Activated CD8-positive, alpha-beta T cell treated with anti-CD3 and anti-CD28 coated beads for 36 hours (primary cell): ENCODE measurements at regions of chr19 and their contacts with region 1.

Region 1: GRCh38 chr19:10027158-10027693 is 13.9 kb downstream of the RDH8 start:
- DNase-seq: no peak
- ATAC-seq: no peak
- H3K4me3 Mint-ChIP-seq: no peak overlapping the region
- H3K27ac Mint-ChIP-seq: no peak overlapping the region
- H3K4me1 Mint-ChIP-seq: peaks cover 4% of the 10 kb centered on the region
- H3K27me3 Mint-ChIP-seq: peaks cover 11% of the 10 kb centered on the region
- CTCF ChIP-seq: no peak

Region 2: GRCh38 chr19:9923440-9923839 is 103.8 kb before region 1 on chr19:
- CTCF ChIA-PET with region 1: interaction called, 100 read pairs
- POLR2A ChIA-PET with region 1: no interaction called
- intact Hi-C with region 1: no loop called
- DNase-seq: no peak
- ATAC-seq: no peak
- H3K4me3 Mint-ChIP-seq: no peak overlapping the region
- H3K27ac Mint-ChIP-seq: no peak overlapping the region
- H3K4me1 Mint-ChIP-seq: no peaks in the 10 kb centered on the region
- H3K27me3 Mint-ChIP-seq: peaks cover 9% of the 10 kb centered on the region
- CTCF ChIP-seq: peak; percentile 13

Region 3: GRCh38 chr19:9939301-9939913 is 87.8 kb before region 1 on chr19:
- CTCF ChIA-PET with region 1: interaction called, 18 read pairs
- POLR2A ChIA-PET with region 1: no interaction called
- intact Hi-C with region 1: loop called (anchors 2 kb)
- DNase-seq: no peak
- ATAC-seq: no peak
- H3K4me3 Mint-ChIP-seq: no peak overlapping the region
- H3K27ac Mint-ChIP-seq: no peak overlapping the region
- H3K4me1 Mint-ChIP-seq: peaks cover 20% of the 10 kb centered on the region
- H3K27me3 Mint-ChIP-seq: peaks cover 48% of the 10 kb centered on the region
- CTCF ChIP-seq: no peak

Region 4: DNA sequence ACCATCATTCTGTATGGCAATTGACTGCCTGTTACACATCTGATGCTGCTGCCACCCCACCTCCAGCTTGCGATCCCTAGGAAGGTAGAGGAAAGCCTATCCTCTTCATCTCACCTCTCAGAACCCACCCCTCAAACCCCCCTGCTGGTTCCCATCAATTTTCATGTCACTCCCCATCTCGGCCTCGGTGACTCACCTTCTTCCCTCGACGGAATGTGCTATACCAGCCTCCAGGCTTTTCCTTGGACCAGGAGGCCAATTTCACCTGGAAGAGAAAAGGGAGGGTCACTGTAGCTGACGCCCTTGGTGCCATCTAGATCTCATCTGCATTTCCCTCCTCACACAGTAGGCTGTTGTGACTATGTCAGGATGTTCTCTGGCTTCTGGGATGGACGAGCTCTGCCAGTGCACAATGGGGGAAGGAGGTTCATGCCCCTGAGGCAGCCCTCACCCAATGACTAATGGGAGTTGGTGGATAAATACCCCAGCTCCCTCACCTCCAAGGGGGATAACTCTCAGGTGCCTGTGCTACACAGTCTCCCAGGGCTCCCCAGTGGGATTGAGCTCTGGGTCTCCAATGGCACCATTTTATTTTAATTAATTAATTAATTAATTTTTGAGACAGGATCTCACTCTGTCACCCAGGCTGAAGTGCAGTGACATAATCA is 64.5 kb before region 1 on chr19:
- CTCF ChIA-PET with region 1: interaction called, 11 read pairs
- POLR2A ChIA-PET with region 1: no interaction called
- intact Hi-C with region 1: no loop called
- DNase-seq: no peak
- ATAC-seq: no peak
- H3K4me3 Mint-ChIP-seq: no peak overlapping the region
- H3K27ac Mint-ChIP-seq: no peak overlapping the region
- H3K4me1 Mint-ChIP-seq: peaks cover 3% of the 10 kb centered on the region
- H3K27me3 Mint-ChIP-seq: peaks cover 31% of the 10 kb centered on the region
- CTCF ChIP-seq: no peak

Region 5: DNA sequence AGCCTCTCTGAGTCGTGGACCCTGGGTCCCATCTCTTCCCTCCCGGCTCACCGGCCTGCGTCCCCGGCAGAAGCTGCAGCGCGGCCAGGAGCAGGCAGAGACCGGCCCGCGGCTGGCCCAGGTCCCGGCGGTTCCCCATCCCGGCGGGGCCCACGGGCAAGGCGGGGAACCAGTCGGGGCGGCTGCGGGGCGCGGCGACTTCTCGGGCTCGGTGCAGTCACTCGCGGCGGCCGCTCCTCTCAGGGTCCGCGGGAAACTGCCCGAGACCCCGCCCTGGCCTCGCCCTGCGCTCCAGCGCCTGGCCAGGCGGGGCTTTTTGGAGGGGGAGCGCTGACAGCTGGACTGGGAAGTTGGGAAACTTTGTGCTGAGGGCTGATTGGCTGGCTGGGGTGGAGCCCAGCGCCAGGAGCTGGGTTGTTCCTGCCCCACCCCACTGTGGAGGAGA is 17.0 kb before region 1 on chr19 and contains the start of gene COL5A3:
- CTCF ChIA-PET with region 1: interaction called, 26 read pairs
- POLR2A ChIA-PET with region 1: interaction called, 4 read pairs
- intact Hi-C with region 1: no loop called
- DNase-seq: no peak
- ATAC-seq: no peak
- H3K4me3 Mint-ChIP-seq: no peak within 1 kb of the TSS
- H3K27ac Mint-ChIP-seq: no peak within 1 kb of the TSS
- H3K4me1 Mint-ChIP-seq: peaks cover 28% of the 10 kb centered on the region
- H3K27me3 Mint-ChIP-seq: peaks cover 49% of the 10 kb centered on the region
- CTCF ChIP-seq: no peak
- total RNA-seq, gene COL5A3: 2.7 to 2.8 TPM

Region 6: GRCh38 chr19:10142701-10143375 is 115.6 kb after region 1 on chr19:
- CTCF ChIA-PET with region 1: no interaction called
- POLR2A ChIA-PET with region 1: no interaction called
- intact Hi-C with region 1: no loop called
- DNase-seq: peak; percentile 53
- ATAC-seq: peak; percentile 87
- H3K4me3 Mint-ChIP-seq: peak overlapping the region; percentile 31
- H3K27ac Mint-ChIP-seq: peak overlapping the region; percentile 86
- H3K4me1 Mint-ChIP-seq: peaks cover 34% of the 10 kb centered on the region
- H3K27me3 Mint-ChIP-seq: no peaks in the 10 kb centered on the region
- CTCF ChIP-seq: no peak

Region 7: DNA sequence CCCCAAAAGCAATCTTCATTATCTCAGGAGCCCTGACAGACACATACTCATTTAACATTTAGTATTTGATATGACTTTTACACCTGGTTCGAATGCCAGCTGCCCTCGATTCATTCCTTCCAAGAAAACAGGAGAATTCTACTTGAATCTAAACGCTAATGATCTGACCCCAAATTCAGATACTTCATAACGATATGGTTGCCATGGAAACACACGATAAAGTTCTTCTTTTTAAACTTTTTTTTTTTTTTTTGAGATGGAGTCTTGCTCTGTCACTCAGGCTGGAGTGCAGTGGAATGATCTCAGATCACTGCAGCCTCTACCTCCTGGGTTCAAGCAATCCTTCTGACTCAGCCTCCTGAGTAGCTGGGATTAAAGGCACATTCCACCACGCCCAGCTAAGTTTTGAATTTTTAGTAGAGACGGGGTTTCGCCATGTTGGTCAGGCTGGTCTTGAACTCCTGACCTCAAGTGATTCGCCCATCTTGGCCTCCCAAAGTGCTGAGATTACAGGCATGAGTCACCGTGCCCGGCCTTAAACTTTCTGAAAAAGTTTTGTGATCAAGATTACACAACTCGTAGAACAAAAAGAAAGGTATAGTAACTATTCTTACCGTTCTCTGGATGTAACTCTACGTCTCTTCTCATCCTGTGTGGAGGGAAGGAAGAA is 146.2 kb after region 1 on chr19:
- CTCF ChIA-PET with region 1: no interaction called
- POLR2A ChIA-PET with region 1: no interaction called
- intact Hi-C with region 1: no loop called
- DNase-seq: no peak
- ATAC-seq: no peak
- H3K4me3 Mint-ChIP-seq: no peak overlapping the region
- H3K27ac Mint-ChIP-seq: no peak overlapping the region
- H3K4me1 Mint-ChIP-seq: peaks cover 4% of the 10 kb centered on the region
- H3K27me3 Mint-ChIP-seq: no peaks in the 10 kb centered on the region
- CTCF ChIP-seq: no peak